ENCODE measurements at regions of chr5 and their contacts with region 1.

Region 1: DNA sequence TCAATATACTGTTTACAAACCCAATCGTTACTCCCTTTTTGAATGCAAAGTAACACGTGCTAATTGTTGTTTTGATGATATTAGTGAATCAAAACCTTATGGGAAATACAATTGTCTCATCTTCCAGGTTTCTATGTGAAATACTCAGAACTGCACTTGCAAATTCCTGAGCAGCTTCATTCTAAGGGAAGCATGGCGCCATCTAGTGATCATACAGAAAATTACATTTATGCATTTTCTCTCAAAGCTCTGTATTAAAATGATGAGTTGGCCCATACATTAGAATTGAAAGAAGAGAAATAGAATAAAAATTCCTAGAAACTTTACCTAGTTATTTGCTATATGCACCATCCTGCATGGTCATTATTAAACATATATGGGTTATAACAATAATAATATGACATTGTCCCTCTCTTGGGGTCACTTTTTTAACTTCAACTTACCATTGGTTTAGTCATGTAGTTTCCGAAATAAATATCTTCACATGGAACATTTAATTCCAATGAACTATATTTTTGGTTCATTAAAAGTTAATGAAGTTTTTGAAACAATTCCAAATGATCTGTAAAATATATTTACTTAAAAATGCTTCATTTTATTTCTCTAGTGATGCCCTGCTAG is 220.0 kb downstream of the PDE4D start:
- DNase-seq: peak; percentile 70
- ATAC-seq: no peak
- H3K4me3 ChIP-seq: no peak overlapping the region
- H3K4me3 Mint-ChIP-seq: no peak overlapping the region
- H3K27ac ChIP-seq: no peak overlapping the region
- H3K27ac Mint-ChIP-seq: no peak overlapping the region
- H3K4me1 ChIP-seq: peaks cover 0 to 4% of the 10 kb centered on the region in 2 donors
- H3K4me1 Mint-ChIP-seq: peaks cover 14% of the 10 kb centered on the region
- H3K27me3 ChIP-seq: no peaks in the 10 kb centered on the region
- H3K27me3 Mint-ChIP-seq: no peaks in the 10 kb centered on the region
- CTCF ChIP-seq: peak; percentile 95

Region 2: DNA sequence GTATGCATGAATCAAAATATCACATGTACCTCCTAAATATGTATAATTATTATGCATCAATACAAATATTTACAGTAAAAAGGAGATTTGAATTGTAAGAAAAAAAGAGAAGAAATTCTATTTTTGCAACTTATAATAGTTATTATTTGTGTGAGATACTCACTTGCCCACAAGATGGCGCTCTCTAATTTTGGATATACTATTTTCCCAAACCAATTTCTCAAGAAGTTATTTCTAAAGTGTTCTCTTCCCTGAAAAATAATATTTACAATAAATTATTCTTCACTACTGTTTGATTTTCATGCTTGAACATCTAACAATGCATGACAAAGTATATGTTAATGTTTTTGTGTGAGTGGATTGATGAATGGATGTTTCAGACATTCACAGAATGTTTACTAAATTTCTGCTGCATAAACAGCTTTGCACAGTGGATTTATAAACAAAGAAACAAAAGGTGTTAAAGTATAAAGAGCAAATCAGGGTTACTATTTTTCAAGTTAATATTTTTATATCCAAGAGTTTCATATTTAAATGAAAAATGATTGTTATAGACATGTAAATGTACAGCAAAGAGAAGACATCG is 283.4 kb before region 1 on chr5:
- CTCF ChIA-PET with region 1: interaction called, 83 read pairs
- POLR2A ChIA-PET with region 1: no interaction called
- intact Hi-C with region 1: loop called (anchors 1 kb)
- DNase-seq: peak; percentile 53
- ATAC-seq: no peak
- H3K4me3 ChIP-seq: no peak overlapping the region
- H3K4me3 Mint-ChIP-seq: no peak overlapping the region
- H3K27ac ChIP-seq: no peak overlapping the region
- H3K27ac Mint-ChIP-seq: no peak overlapping the region
- H3K4me1 ChIP-seq: no peaks in the 10 kb centered on the region
- H3K4me1 Mint-ChIP-seq: peaks cover 21% of the 10 kb centered on the region
- H3K27me3 ChIP-seq: no peaks in the 10 kb centered on the region
- H3K27me3 Mint-ChIP-seq: no peaks in the 10 kb centered on the region
- CTCF ChIP-seq: peak; percentile 95

Region 3: DNA sequence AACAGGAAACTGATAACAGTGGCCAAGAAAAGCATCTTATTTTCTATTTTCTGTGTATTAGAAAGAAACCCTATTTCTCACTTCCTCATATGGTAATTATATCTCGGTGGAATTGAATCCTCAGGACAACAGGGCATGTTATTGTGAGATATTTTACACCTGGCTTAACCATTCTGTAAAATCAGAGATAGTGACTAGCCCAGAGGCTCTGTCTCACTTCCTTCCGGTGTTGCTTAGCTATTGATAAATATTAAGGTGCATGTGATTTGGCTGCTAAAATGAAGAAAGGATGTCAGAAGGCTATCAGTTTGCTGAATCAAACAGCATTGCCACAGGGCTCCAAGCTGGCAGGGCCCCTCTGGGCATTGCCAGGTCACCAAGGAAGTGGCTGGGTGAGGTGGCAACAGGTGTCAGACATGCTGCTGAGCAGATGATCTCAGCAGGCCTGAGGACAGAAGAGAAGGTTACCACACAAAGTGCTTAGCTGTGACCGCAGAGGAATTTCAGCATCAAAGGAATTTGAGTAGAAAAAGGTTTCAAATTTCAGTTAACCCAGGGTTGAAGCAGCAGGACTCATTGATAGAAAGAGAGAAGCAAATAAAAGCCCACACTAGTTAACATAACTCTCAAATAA is 110.7 kb before region 1 on chr5:
- CTCF ChIA-PET with region 1: interaction called, 6 read pairs
- POLR2A ChIA-PET with region 1: no interaction called
- intact Hi-C with region 1: loop called (anchors 5 kb)
- DNase-seq: peak; percentile 91
- ATAC-seq: peak; percentile 89
- H3K4me3 ChIP-seq: peak overlapping the region in 2 of 5 experiments; percentile 8 to 16
- H3K4me3 Mint-ChIP-seq: peak overlapping the region; percentile 68
- H3K27ac ChIP-seq: peak overlapping the region; percentile 97
- H3K27ac Mint-ChIP-seq: peak overlapping the region; percentile 96
- H3K4me1 ChIP-seq: peaks cover 56 to 57% of the 10 kb centered on the region in 2 donors
- H3K4me1 Mint-ChIP-seq: peaks cover 64% of the 10 kb centered on the region
- H3K27me3 ChIP-seq: no peaks in the 10 kb centered on the region
- H3K27me3 Mint-ChIP-seq: no peaks in the 10 kb centered on the region
- CTCF ChIP-seq: no peak

Region 4: GRCh38 chr5:59624898-59625297 is 48.6 kb before region 1 on chr5:
- CTCF ChIA-PET with region 1: no interaction called
- POLR2A ChIA-PET with region 1: no interaction called
- intact Hi-C with region 1: no loop called
- DNase-seq: no peak
- ATAC-seq: no peak
- H3K4me3 ChIP-seq: no peak overlapping the region
- H3K4me3 Mint-ChIP-seq: no peak overlapping the region
- H3K27ac ChIP-seq: no peak overlapping the region
- H3K27ac Mint-ChIP-seq: no peak overlapping the region
- H3K4me1 ChIP-seq: peaks cover 15 to 16% of the 10 kb centered on the region in 2 donors
- H3K4me1 Mint-ChIP-seq: peaks cover 27% of the 10 kb centered on the region
- H3K27me3 ChIP-seq: no peaks in the 10 kb centered on the region
- H3K27me3 Mint-ChIP-seq: no peaks in the 10 kb centered on the region
- CTCF ChIP-seq: no peak

Region 5: DNA sequence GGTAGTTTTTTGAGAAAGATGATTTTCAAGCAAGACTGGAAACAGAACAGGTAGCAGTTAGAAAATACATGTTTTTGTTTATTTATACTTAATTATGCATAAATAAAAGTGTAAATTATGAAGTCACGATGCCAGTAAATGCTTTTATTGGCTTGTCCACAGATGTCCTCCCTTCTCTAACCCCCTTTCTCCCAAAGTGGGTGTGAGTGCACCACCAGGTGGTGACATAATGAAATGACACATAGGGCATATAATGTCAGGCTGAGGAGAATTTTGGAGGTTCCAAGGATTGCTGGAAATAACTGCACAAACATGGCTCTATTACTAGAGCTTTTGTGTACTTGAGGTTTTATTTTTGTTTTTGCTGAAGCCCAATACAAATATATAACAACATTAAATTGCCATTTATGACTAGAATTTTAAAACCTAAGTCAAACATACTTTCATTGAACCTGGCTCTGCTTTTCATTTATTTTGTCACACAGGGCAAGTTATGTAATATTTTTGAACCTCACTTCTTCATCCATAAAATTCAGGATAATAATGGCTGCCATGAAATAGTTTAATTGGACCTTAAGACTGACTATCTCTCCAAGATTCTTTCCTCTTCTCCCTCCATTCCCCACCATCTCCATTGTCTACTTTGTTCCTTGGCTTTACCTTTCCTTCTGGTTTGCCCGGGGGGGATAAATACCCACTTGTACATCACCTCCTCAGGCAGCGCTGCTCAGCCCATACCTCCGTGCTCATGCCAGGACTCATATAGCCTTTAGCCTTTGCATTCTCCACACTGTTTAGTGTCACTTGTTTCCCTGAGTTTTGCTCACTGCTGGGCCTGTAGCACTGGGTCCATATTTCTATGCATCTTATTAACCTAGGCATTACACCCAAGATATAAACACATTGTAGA is 51.2 kb after region 1 on chr5:
- CTCF ChIA-PET with region 1: interaction called, 3 read pairs
- POLR2A ChIA-PET with region 1: no interaction called
- intact Hi-C with region 1: loop called (anchors 10 kb)
- DNase-seq: peak; percentile 59
- ATAC-seq: peak; percentile 64
- H3K4me3 ChIP-seq: no peak overlapping the region
- H3K4me3 Mint-ChIP-seq: no peak overlapping the region
- H3K27ac ChIP-seq: no peak overlapping the region
- H3K27ac Mint-ChIP-seq: no peak overlapping the region
- H3K4me1 ChIP-seq: no peaks in the 10 kb centered on the region
- H3K4me1 Mint-ChIP-seq: peaks cover 19% of the 10 kb centered on the region
- H3K27me3 ChIP-seq: no peaks in the 10 kb centered on the region
- H3K27me3 Mint-ChIP-seq: no peaks in the 10 kb centered on the region
- CTCF ChIP-seq: peak; percentile 79

Region 6: GRCh38 chr5:59893429-59894227 is 220.1 kb after region 1 on chr5 and contains the start of gene PDE4D:
- CTCF ChIA-PET with region 1: no interaction called
- POLR2A ChIA-PET with region 1: no interaction called
- intact Hi-C with region 1: no loop called
- DNase-seq: peak; percentile 10
- ATAC-seq: no peak
- H3K4me3 ChIP-seq: peak within 1 kb of the TSS in 1 of 5 experiments; percentile 24
- H3K4me3 Mint-ChIP-seq: peak within 1 kb of the TSS; percentile 60
- H3K27ac ChIP-seq: no peak within 1 kb of the TSS
- H3K27ac Mint-ChIP-seq: no peak within 1 kb of the TSS
- H3K4me1 ChIP-seq: peaks cover 8 to 17% of the 10 kb centered on the region in 2 donors
- H3K4me1 Mint-ChIP-seq: peaks cover 12% of the 10 kb centered on the region
- H3K27me3 ChIP-seq: peaks cover 0 to 32% (median 26%) of the 10 kb centered on the region in 4 experiments
- H3K27me3 Mint-ChIP-seq: peaks cover 56% of the 10 kb centered on the region
- CTCF ChIP-seq: no peak
- total RNA-seq, gene PDE4D: 167 and 171 TPM in 2 replicates